PC-9 (cell line): ENCODE measurements at regions of chr16 and their contacts with region 1.

Region 1: GRCh38 chr16:11535471-11535870 is 51.2 kb downstream of the LITAF start:
- DNase-seq: peak; percentile 37 to 93
- H3K4me3 ChIP-seq: no peak overlapping the region
- H3K27ac ChIP-seq: peak overlapping the region; percentile 39; the same call in 1 of the 2 replicates
- H3K4me1 ChIP-seq: peaks cover 26% of the 10 kb centered on the region
- H3K27me3 ChIP-seq: no peaks in the 10 kb centered on the region
- CTCF ChIP-seq: no peak

Region 2: DNA sequence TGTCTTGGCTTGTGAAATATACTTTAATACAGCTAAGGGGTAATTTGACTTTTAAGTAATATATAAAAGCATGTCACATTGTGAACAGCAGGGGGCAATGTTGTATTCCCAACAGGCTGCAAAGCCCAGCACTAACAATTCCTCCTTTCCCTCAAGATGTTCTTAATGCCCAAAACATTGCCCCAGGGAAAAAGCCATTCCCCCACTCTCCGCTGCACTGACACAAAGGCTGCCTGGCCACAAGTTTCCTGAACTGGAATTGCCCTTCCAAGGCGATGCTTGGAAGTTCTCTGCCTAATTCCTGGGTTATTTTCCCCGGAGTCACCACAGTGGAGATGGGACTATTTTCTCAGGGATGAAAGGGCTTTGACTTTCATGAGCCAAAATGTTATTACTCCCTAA is 563.9 kb before region 1 on chr16:
- CTCF ChIA-PET with region 1: interaction called, 4 read pairs
- POLR2A ChIA-PET with region 1: no interaction called
- intact Hi-C with region 1: loop called (anchors 5 kb)
- DNase-seq: peak; percentile 80 to 82
- H3K4me3 ChIP-seq: no peak overlapping the region
- H3K27ac ChIP-seq: no peak overlapping the region
- H3K4me1 ChIP-seq: peaks cover 9% of the 10 kb centered on the region
- H3K27me3 ChIP-seq: no peaks in the 10 kb centered on the region
- CTCF ChIP-seq: peak; percentile 89

Region 3: DNA sequence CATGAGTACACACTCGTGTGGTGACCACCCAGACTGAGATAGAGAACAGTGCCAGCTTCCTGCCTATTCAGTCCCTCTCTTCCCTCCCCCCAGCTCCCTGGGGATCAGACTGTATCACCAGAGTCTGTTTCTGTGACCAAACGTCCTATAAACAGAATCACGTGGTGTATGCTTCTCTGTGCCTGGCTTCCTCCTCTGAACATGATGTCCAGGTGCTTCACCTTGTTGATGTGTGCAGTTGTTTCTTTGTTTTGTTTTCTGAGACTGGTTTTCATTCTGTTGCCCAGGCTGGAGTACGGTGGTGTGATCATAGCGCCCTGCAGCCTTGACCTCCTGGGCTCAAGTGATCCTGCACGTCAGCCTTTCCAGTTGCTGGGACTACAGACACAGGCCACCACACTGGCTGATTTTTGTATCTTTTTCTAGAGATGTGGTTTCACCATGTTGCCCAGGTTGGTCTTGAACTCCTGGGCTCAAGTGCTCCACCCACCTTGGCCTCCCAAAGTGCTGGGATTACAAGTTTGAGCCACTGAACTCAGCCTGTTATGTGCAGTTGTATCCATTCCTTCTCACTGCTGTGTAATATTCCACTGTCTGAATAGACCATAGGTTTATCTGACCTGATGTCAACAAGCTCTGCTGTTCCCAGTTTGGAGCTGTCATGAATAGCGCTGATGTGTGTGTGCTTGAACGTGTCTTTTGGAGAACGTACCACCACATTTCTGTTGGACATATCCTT is 225.4 kb before region 1 on chr16:
- CTCF ChIA-PET with region 1: no interaction called
- POLR2A ChIA-PET with region 1: no interaction called
- intact Hi-C with region 1: no loop called
- DNase-seq: no peak
- H3K4me3 ChIP-seq: no peak overlapping the region
- H3K27ac ChIP-seq: no peak overlapping the region
- H3K4me1 ChIP-seq: peaks cover 29% of the 10 kb centered on the region
- H3K27me3 ChIP-seq: no peaks in the 10 kb centered on the region
- CTCF ChIP-seq: no peak

Region 4: DNA sequence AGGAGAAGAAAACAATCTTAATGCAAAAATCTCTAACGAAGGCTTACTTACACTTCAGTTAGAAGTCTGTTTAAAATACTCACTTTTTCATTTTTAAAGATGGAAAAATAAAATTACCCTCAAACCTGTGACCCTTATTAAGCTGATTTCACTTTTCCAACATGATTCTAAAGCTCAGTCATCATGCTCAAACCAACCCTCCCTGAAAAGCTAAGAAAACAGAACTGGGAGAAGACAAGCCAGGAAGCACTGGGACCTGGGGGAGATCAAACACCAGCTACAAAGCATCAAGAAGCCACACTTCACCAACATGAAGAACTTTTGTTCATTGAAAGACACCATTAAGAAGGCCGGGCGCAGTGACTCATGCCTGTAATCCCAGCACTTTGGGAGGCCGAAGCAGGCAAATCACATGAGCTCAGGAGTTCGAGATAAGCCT is 37.6 kb before region 1 on chr16:
- CTCF ChIA-PET with region 1: interaction called, 12 read pairs
- POLR2A ChIA-PET with region 1: interaction called, 4 read pairs
- intact Hi-C with region 1: loop called (anchors 5 kb)
- DNase-seq: peak in 1 of 2 experiments; percentile 65
- H3K4me3 ChIP-seq: no peak overlapping the region
- H3K27ac ChIP-seq: peak overlapping the region; percentile 50
- H3K4me1 ChIP-seq: peaks cover 20% of the 10 kb centered on the region
- H3K27me3 ChIP-seq: no peaks in the 10 kb centered on the region
- CTCF ChIP-seq: no peak

Region 5: GRCh38 chr16:11524098-11524750 is 11.2 kb before region 1 on chr16:
- CTCF ChIA-PET with region 1: no interaction called
- POLR2A ChIA-PET with region 1: no interaction called
- intact Hi-C with region 1: no loop called
- DNase-seq: no peak
- H3K4me3 ChIP-seq: no peak overlapping the region
- H3K27ac ChIP-seq: no peak overlapping the region
- H3K4me1 ChIP-seq: no peaks in the 10 kb centered on the region
- H3K27me3 ChIP-seq: no peaks in the 10 kb centered on the region
- CTCF ChIP-seq: no peak

Region 6: DNA sequence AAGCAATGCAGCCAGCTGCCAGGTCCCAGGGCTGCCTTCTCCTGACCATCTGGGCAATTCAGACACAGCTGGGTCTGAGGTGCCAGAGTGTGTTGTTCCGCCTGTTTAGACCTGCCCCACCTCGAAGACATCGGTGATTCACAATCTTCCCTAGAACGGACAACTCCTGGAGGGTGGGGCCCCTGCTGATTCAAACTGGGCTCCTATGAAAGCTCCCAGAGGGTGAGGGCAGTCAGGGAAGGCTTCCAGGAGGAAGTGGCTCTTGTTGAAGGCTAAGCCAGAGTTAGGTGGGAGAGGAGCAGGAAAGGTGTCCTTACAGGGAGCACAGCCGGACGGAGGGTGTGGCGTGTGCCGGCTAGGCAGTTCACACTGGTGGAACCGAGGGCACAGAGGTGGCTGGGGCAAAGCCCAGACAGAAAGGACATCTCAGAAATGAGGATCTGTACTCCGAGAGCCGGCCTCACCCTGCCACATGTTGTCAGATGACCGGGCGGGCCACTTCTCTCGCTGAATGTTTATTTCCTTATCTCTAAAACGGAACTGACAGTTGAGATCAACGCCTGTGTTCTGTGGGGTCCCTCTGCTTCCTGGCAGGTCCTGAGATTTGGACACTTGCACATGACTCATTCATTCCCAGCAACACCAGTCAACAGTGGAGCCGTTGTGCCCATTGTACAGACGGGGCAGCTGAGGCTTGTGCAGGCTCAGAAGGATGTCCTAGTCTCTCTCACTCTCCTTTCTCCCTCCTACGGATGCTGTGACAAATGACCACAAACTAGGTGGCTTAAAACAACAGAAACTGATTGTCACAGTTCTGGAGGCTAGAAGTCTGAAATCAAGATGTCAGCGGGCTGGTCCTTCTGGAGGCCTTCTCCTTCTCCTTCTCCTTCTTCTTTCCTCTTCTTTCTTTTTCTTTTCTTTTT is 78.2 kb after region 1 on chr16:
- CTCF ChIA-PET with region 1: no interaction called
- POLR2A ChIA-PET with region 1: no interaction called
- intact Hi-C with region 1: loop called (anchors 1 kb)
- DNase-seq: peak; percentile 54 to 70
- H3K4me3 ChIP-seq: no peak overlapping the region
- H3K27ac ChIP-seq: peak overlapping the region; percentile 94
- H3K4me1 ChIP-seq: peaks cover 84% of the 10 kb centered on the region
- H3K27me3 ChIP-seq: no peaks in the 10 kb centered on the region
- CTCF ChIP-seq: no peak

Region 7: DNA sequence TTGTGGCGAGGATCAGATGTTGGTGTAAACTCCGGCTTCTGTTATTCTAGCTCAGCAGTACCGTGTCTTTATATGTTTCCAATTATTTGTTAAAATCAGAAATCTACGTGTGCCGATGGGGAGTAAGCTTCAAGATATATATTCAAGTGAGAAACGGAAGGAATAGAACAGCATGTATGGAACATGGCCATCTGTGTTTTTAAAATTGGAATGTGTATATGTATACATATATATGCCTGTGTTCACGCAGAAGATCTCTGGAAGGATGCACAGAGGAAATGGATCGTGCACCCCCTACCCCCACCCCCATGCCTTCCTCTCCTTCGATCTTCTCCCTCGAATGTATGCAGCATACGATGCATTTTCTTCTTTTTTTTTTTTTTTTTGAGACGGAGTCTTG is 125.1 kb after region 1 on chr16:
- CTCF ChIA-PET with region 1: interaction called, 10 read pairs
- POLR2A ChIA-PET with region 1: no interaction called
- intact Hi-C with region 1: loop called (anchors 5 kb)
- DNase-seq: no peak
- H3K4me3 ChIP-seq: no peak overlapping the region
- H3K27ac ChIP-seq: no peak overlapping the region
- H3K4me1 ChIP-seq: no peaks in the 10 kb centered on the region
- H3K27me3 ChIP-seq: no peaks in the 10 kb centered on the region
- CTCF ChIP-seq: no peak

Region 8: GRCh38 chr16:11715246-11715947 is 179.9 kb after region 1 on chr16:
- CTCF ChIA-PET with region 1: interaction called, 5 read pairs
- POLR2A ChIA-PET with region 1: no interaction called
- intact Hi-C with region 1: loop called (anchors 10 kb)
- DNase-seq: no peak
- H3K4me3 ChIP-seq: no peak overlapping the region
- H3K27ac ChIP-seq: no peak overlapping the region
- H3K4me1 ChIP-seq: no peaks in the 10 kb centered on the region
- H3K27me3 ChIP-seq: no peaks in the 10 kb centered on the region
- CTCF ChIP-seq: no peak